ENCODE measurements at regions of chr6 and their contacts with region 1.

Region 1: GRCh38 chr6:135121434-135121833 is 59.7 kb upstream of the MYB start:
- DNase-seq: no peak

Region 2: DNA sequence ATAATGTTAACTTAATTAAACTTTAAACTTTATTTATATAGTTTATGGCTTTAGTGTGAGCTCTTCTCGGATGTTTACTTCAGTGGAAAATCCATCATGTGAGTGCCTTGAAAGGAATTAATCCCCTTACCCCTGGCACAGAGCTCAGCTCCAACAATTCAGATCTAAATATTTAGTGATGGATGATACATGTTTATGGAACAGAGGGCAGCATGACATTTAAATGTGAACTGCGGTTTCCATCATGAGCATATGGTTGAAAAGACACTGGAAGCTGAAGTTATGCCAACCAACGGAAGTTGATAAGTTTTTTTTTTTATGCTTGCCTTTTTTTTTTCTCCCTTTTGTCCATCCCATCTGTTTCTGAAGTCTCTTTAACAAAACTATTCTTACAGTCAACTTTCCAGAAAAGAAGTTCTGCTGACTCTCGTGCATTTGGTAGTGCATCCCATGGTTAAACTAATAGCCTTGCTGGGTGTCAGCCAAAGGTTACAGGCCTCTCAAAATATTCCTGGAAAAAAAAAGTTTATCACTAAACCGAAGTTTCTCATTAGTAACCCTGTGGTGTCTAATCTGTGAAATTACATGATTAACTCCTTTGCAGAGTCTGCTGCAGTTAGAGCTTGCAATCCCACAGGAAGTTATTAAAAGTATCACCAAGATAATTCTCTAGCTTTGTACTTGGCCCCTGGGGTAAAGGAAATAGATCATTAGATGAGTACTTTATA is 1476.4 kb before region 1 on chr6:
- intact Hi-C with region 1: no loop called
- DNase-seq: no peak

Region 3: DNA sequence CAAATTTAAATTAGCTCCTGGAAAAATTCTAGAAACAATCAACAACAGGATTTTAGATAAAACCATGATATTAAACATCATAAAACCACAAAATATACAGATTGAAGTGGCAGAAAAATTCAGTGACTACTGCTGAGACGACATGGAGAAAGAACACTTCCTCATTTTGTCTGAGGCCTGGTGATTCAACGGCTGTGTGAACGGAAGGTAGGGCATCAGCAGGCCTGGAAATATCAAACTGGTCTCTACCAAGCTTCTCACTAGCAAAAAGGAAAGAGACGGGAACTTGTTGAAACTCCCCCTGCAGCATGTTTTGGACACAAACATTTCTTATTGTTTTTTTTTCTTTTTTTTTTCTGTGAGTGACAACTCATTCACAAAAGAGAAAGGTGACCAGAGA is 434.1 kb after region 1 on chr6:
- intact Hi-C with region 1: loop called in 1 of 2 experiments (anchors 5 kb)
- DNase-seq: no peak

Region 4: GRCh38 chr6:135951169-135951568 is 829.7 kb after region 1 on chr6:
- intact Hi-C with region 1: no loop called
- DNase-seq: no peak